Mammary epithelial cell (primary cell): ENCODE measurements at regions of chrX and their contacts with region 1.

Region 1: DNA sequence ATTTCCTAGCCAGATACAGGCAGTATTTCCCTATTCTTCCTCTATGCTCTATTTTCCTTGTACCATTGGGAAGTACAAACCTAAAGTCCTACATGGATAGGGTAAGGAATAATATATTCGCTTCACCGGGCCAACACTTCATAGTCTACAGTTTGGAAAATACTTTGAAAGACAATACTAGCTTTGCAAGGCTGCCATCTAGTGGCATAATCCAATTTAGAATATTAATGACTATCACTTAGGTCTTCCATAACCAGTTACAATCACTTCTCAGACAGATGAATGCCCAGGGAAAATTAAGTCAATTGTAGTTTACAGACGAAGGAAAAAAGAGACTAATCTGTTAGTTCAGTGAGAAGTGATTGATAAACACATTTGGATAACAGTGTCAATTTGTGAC is 141.0 kb upstream of the FAM47C start:
- DNase-seq: peak; percentile 9
- H3K4me3 ChIP-seq: no peak overlapping the region
- H3K27ac ChIP-seq: no peak overlapping the region
- H3K4me1 ChIP-seq: no peaks in the 10 kb centered on the region
- H3K27me3 ChIP-seq: no peaks in the 10 kb centered on the region
- CTCF ChIP-seq: peak; percentile 52 to 59

Region 2: DNA sequence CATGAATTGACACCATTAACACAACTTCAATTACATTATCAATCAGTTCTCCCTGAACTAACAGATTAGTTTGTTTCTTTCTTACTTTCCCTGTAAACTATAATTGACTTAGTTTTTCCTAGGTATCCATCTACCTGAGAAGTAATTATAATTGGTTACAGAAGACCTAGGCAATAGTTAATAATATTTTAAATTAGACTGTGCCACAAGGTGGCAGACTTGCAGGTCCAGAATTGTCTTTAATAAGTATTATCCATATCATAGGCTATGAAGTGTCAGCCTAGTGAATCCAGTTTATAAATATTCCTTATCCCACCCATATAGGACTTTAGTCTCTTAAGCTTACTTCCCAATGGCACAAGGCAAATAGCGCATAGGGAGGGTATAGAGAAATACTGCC is 1973.4 kb before region 1 on chrX:
- CTCF ChIA-PET with region 1: no interaction called
- dilution Hi-C with region 1: no loop called
- in situ Hi-C with region 1: no loop called
- intact Hi-C with region 1: loop called (anchors 10 kb)
- DNase-seq: no peak
- H3K4me3 ChIP-seq: no peak overlapping the region
- H3K27ac ChIP-seq: no peak overlapping the region
- H3K4me1 ChIP-seq: no peaks in the 10 kb centered on the region
- H3K27me3 ChIP-seq: no peaks in the 10 kb centered on the region
- CTCF ChIP-seq: peak; percentile 49

Region 3: GRCh38 chrX:35890699-35891098 is 976.4 kb before region 1 on chrX:
- CTCF ChIA-PET with region 1: no interaction called
- dilution Hi-C with region 1: no loop called
- in situ Hi-C with region 1: no loop called
- intact Hi-C with region 1: loop called (anchors 5 kb)
- DNase-seq: peak; percentile 35
- H3K4me3 ChIP-seq: no peak overlapping the region
- H3K27ac ChIP-seq: no peak overlapping the region
- H3K4me1 ChIP-seq: no peaks in the 10 kb centered on the region
- H3K27me3 ChIP-seq: no peaks in the 10 kb centered on the region
- CTCF ChIP-seq: peak; percentile 69 to 72